ENCODE measurements at regions of chr17 and their contacts with region 1.

Region 1: GRCh38 chr17:28227316-28228125 is 91.5 kb upstream of the TMEM97 start:
- DNase-seq: peak; percentile 73
- H3K4me3 ChIP-seq: peak overlapping the region; percentile 38 to 53 (median 49)
- H3K27ac ChIP-seq: no peak overlapping the region
- H3K4me1 ChIP-seq: peaks cover 16% of the 10 kb centered on the region
- H3K27me3 ChIP-seq: no peaks in the 10 kb centered on the region
- CTCF ChIP-seq: peak in 1 of 2 donors; percentile 16

Region 2: GRCh38 chr17:28216528-28216927 is 11.0 kb before region 1 on chr17:
- CTCF ChIA-PET with region 1: interaction called, 10 read pairs
- dilution Hi-C with region 1: no loop called
- in situ Hi-C with region 1: no loop called
- intact Hi-C with region 1: no loop called
- DNase-seq: peak; percentile 65
- H3K4me3 ChIP-seq: no peak overlapping the region
- H3K27ac ChIP-seq: no peak overlapping the region
- H3K4me1 ChIP-seq: peaks cover 8% of the 10 kb centered on the region
- H3K27me3 ChIP-seq: no peaks in the 10 kb centered on the region
- CTCF ChIP-seq: no peak

Region 3: DNA sequence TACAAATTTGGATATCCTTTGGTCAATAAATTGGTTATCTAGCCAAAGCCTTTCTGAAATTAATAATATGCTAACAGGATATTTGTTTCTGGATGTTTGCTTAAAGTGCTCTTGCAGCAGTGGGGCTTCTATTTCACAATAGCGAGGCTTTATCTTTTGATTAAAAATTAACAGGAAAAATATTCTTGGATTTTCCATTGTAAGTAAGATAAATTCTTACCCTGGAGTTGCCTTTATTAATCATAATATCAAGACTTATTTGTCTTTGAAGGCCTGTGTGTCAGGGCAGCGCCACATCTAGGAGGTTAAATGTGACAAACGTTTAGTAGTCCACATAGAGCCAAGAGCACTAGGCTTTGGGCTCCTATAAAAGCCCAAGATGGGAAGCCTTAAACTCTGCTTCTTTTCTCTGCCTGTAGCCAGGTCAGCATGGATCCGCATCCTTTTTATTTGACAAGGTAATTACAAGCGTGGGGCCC is 96.8 kb after region 1 on chr17:
- CTCF ChIA-PET with region 1: no interaction called
- dilution Hi-C with region 1: no loop called
- in situ Hi-C with region 1: loop called in 1 of 2 experiments (anchors 5 kb)
- intact Hi-C with region 1: no loop called
- DNase-seq: no peak
- H3K4me3 ChIP-seq: no peak overlapping the region
- H3K27ac ChIP-seq: no peak overlapping the region
- H3K4me1 ChIP-seq: peaks cover 5% of the 10 kb centered on the region
- H3K27me3 ChIP-seq: no peaks in the 10 kb centered on the region
- CTCF ChIP-seq: no peak

Region 4: GRCh38 chr17:28384281-28385036 is 156.9 kb after region 1 on chr17:
- CTCF ChIA-PET with region 1: no interaction called
- dilution Hi-C with region 1: loop called (anchors 10 kb)
- in situ Hi-C with region 1: no loop called
- intact Hi-C with region 1: no loop called
- DNase-seq: no peak
- H3K4me3 ChIP-seq: no peak overlapping the region
- H3K27ac ChIP-seq: no peak overlapping the region
- H3K4me1 ChIP-seq: peaks cover 13% of the 10 kb centered on the region
- H3K27me3 ChIP-seq: no peaks in the 10 kb centered on the region
- CTCF ChIP-seq: no peak